ENCODE measurements at regions of chr9 and their contacts with region 1.

Region 1: DNA sequence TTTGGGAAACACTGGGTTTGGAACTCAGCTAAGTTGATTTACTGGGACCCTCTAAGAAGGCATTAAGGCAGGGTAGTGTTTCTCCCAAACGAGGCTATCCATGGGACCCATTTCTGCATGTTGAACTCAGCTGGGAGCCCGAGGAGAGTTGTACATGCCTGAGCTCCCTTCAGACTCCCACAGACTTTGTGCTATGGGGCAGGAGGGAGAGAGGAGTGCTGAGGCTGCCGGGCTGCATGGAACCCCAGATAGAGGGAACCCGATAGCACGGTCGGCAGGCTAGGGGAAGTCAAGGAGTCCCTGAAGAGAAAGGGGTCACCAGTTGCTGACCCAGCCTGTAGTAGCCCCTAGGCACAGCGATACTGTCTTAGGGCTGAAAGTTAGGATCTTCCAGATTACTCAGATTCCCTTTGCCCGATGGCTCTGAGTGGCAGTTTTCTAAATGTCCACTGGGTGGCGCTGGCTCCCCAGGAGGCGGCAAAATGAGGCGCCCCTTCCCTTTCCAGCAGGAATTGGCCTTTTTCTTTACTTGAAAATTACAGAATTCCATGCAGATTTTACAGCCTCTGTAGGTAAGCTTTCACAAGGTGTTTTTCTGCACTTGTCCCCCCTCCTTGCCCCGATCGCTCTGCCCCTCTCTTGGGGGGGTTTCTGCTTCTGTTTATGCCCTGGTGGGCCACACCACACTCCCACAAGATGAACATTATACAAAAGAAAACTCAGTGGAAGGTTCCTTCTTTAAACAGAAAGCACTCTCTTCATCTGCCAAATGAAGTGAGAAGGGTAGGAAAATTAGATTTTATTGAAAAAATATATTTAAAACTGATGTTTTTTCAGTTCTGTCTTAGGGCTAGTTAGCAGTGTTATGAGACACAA is 17.8 kb downstream of the NANS start:
- DNase-seq: peak; percentile 82
- H3K4me3 ChIP-seq: peak overlapping the region in 1 of 4 donors; percentile 22
- H3K27ac ChIP-seq: peak overlapping the region; percentile 87 to 94 (median 88)
- H3K4me1 ChIP-seq: peaks cover 17 to 58% (median 33%) of the 10 kb centered on the region in 4 donors
- H3K27me3 ChIP-seq: no peaks in the 10 kb centered on the region
- CTCF ChIP-seq: peak; percentile 92 to 98 (median 97)
- EP300 ChIP-seq: no peak
- POLR2A ChIP-seq: no peak

Region 2: GRCh38 chr9:97696803-97697601 is 377.4 kb before region 1 on chr9 and contains the start of gene XPA:
- in situ Hi-C with region 1: no loop called
- intact Hi-C with region 1: no loop called
- DNase-seq: peak; percentile 98
- H3K4me3 ChIP-seq: peak within 1 kb of the TSS; percentile 64 to 90 (median 84)
- H3K27ac ChIP-seq: peak within 1 kb of the TSS; percentile 91 to 97 (median 96)
- H3K4me1 ChIP-seq: peaks cover 0 to 33% (median 12%) of the 10 kb centered on the region in 4 donors
- H3K27me3 ChIP-seq: no peaks in the 10 kb centered on the region
- CTCF ChIP-seq: no peak
- EP300 ChIP-seq: no peak
- POLR2A ChIP-seq: peak; percentile 94
- total RNA-seq, gene XPA: 6.4 to 44.4 (median 12.5) TPM

Region 3: GRCh38 chr9:98263482-98264357 is 189.4 kb after region 1 on chr9:
- in situ Hi-C with region 1: loop called in 3 of 4 experiments (anchors 10 to 25 kb)
- intact Hi-C with region 1: no loop called
- DNase-seq: peak; percentile 86
- H3K4me3 ChIP-seq: no peak overlapping the region
- H3K27ac ChIP-seq: no peak overlapping the region
- H3K4me1 ChIP-seq: no peaks in the 10 kb centered on the region
- H3K27me3 ChIP-seq: no peaks in the 10 kb centered on the region
- CTCF ChIP-seq: peak; percentile 84 to 91 (median 88)
- EP300 ChIP-seq: no peak
- POLR2A ChIP-seq: no peak

Region 4: DNA sequence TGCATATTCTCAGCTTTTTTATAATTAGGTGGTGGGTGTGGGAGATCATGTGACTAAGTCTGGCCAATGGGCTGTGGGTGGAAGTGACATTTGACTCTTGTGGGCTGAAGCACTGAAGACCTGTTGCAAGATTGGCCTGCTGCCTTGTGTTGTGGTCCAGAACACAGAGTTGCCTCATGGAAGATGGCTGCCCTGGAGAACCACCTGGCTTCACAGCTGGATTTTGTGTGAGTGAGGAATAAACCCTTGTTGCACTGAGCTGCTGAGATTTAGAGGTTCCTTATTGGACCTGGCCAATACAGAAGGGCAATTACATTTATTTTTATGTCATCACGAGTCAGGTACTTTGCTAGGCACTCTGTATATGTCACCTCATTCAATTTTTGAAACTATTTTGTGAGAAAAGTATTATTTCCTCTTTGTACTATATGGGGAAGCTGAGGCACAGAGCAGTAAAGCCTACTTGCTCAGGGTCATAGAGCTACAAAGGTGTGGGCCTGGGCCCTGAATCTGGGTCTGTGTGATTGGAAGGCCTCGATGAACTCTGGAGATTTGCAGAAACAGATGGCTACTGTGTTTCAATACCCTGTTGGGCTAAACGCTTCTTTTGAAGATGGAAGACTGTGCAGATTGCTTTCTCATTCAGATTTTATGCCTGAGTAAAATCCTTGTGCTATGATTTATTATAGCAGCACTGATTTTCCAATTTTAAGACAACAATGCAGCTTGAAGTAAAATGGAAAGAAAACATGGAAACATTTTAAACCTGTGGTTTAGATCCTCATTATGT is 252.3 kb after region 1 on chr9:
- in situ Hi-C with region 1: no loop called
- intact Hi-C with region 1: no loop called
- DNase-seq: no peak
- H3K4me3 ChIP-seq: no peak overlapping the region
- H3K27ac ChIP-seq: no peak overlapping the region
- H3K4me1 ChIP-seq: no peaks in the 10 kb centered on the region
- H3K27me3 ChIP-seq: no peaks in the 10 kb centered on the region
- CTCF ChIP-seq: no peak
- EP300 ChIP-seq: no peak
- POLR2A ChIP-seq: no peak